ENCODE measurements at regions of chr1 and their contacts with region 1.

Region 1: DNA sequence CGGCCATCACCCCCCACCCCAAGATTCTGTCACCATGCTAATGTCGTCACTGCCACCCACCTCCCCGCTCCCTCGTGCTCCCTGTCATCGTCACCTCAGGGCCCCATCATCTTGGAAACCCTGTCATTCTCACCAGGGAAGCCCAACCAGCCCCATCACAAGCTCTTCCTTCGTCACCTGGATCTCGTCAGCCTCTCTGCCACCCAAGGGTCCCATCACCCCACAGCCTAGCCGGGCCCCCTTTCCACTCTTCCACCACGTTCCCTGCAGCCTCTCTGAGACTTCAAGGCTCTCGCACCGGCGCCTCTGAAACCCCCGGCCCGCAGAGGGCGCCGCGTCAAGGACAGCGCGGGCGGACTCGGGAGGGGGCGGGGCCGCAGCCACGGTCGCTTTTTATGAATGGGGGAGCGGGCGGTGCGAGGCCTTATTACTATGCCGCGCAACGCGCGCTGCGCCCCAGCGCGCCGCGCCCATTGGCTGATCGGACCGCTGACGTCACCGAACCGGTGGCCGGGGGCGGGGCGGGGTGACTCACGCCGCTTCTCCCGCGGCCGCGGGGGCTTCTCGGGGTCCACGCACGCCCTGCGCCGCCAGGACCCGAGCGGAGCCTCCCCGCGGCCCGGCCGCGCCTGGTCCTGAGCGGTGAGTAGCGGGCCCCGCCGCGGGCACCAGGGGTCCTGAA is at the start of gene GPR3:
- DNase-seq: peak; percentile 84 to 96 (median 91)
- ATAC-seq: peak; percentile 91 to 93 (median 92)
- H3K4me3 ChIP-seq: peak within 1 kb of the TSS; percentile 45 to 61
- H3K4me3 Mint-ChIP-seq: peak within 1 kb of the TSS; percentile 69 to 95 (median 76)
- H3K27ac ChIP-seq: no peak within 1 kb of the TSS
- H3K27ac Mint-ChIP-seq: peak within 1 kb of the TSS; percentile 37 to 38
- H3K4me1 ChIP-seq: peaks cover 5 to 30% of the 10 kb centered on the region in 2 experiments
- H3K4me1 Mint-ChIP-seq: peaks cover 11 to 26% (median 24%) of the 10 kb centered on the region in 3 donors
- H3K27me3 ChIP-seq: peaks cover 0 to 22% of the 10 kb centered on the region in 2 experiments
- H3K27me3 Mint-ChIP-seq: peaks cover 0 to 3% of the 10 kb centered on the region in 2 donors
- total RNA-seq, gene GPR3: 0.21 to 0.35 TPM in 2 of 5 donors, not detected in the others

Region 2: DNA sequence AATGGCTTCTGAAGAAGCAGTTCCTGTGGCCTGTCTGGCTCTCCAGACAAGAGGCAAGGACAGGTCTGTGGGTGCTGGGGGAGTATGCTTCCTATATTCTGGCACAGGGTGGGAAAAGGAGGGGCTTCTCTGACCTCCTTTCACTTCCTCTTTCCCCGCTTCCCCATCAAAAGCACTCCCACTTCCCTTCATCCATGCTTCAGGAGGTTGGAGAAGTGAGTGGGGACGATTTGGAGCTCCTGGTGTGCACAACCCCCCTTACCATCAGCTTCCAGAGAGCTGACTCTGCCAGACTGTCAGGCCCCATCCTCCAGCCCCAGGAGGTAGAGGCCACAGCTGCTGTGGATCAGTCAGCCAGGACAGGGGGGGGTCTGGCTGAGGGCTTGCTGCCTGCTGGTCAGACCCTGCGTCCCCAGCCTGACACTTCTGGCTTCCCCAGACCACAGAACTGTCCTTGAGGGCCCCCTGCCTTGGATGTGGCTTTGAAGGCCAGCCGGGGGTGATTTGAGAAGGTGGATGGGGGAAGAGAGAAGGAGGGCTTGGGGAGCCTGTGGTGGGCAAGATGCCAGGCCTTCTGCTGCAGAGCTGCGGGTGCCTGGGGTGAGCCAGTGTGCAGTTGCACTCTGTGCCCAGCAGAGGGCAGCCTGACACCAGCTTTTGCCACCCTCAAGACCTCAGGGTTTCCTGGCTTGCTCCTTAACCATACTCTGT is 91.7 kb before region 1 on chr1:
- CTCF ChIA-PET with region 1: interaction called, 40 to 44 read pairs
- POLR2A ChIA-PET with region 1: no interaction called
- DNase-seq: peak; percentile 46 to 92 (median 70)
- ATAC-seq: peak; percentile 83 to 90 (median 88)
- H3K4me3 ChIP-seq: no peak overlapping the region
- H3K4me3 Mint-ChIP-seq: no peak overlapping the region
- H3K27ac ChIP-seq: no peak overlapping the region
- H3K27ac Mint-ChIP-seq: no peak overlapping the region
- H3K4me1 ChIP-seq: peaks cover 0 to 8% of the 10 kb centered on the region in 2 experiments
- H3K4me1 Mint-ChIP-seq: peaks cover 0 to 5% (median 2%) of the 10 kb centered on the region in 3 donors
- H3K27me3 ChIP-seq: no peaks in the 10 kb centered on the region
- H3K27me3 Mint-ChIP-seq: no peaks in the 10 kb centered on the region

Region 3: GRCh38 chr1:27332536-27333281 is 59.5 kb before region 1 on chr1:
- CTCF ChIA-PET with region 1: interaction called, 4 to 11 read pairs
- POLR2A ChIA-PET with region 1: no interaction called
- DNase-seq: peak in 32 of 35 experiments; percentile 20 to 80 (median 48)
- ATAC-seq: peak; percentile 73 to 91 (median 80)
- H3K4me3 ChIP-seq: no peak overlapping the region
- H3K4me3 Mint-ChIP-seq: peak overlapping the region in 1 of 3 donors; percentile 5
- H3K27ac ChIP-seq: peak overlapping the region; percentile 32
- H3K27ac Mint-ChIP-seq: peak overlapping the region; percentile 44 to 75
- H3K4me1 ChIP-seq: peaks cover 3 to 24% of the 10 kb centered on the region in 2 experiments
- H3K4me1 Mint-ChIP-seq: peaks cover 36 to 43% (median 38%) of the 10 kb centered on the region in 3 donors
- H3K27me3 ChIP-seq: no peaks in the 10 kb centered on the region
- H3K27me3 Mint-ChIP-seq: no peaks in the 10 kb centered on the region

Region 4: GRCh38 chr1:27365372-27366112 is 26.7 kb before region 1 on chr1:
- CTCF ChIA-PET with region 1: interaction called, 3 to 12 read pairs
- POLR2A ChIA-PET with region 1: interaction called in 1 of 2 experiments, 4 read pairs
- DNase-seq: peak; percentile 37 to 84 (median 70)
- ATAC-seq: peak; percentile 70 to 76 (median 72)
- H3K4me3 ChIP-seq: peak overlapping the region; percentile 53 to 68
- H3K4me3 Mint-ChIP-seq: peak overlapping the region; percentile 85 to 87 (median 86)
- H3K27ac ChIP-seq: no peak overlapping the region
- H3K27ac Mint-ChIP-seq: peak overlapping the region; percentile 57 to 82
- H3K4me1 ChIP-seq: peaks cover 15 to 41% of the 10 kb centered on the region in 2 experiments
- H3K4me1 Mint-ChIP-seq: peaks cover 38 to 48% (median 43%) of the 10 kb centered on the region in 3 donors
- H3K27me3 ChIP-seq: peaks cover 0 to 11% of the 10 kb centered on the region in 2 experiments
- H3K27me3 Mint-ChIP-seq: no peaks in the 10 kb centered on the region

Region 5: GRCh38 chr1:28910379-28911115 is 1518.3 kb after region 1 on chr1:
- CTCF ChIA-PET with region 1: interaction called in 1 of 2 experiments, 3 read pairs
- POLR2A ChIA-PET with region 1: interaction called in 1 of 2 experiments, 10 read pairs
- DNase-seq: no peak
- ATAC-seq: no peak
- H3K4me3 ChIP-seq: no peak overlapping the region
- H3K4me3 Mint-ChIP-seq: no peak overlapping the region
- H3K27ac ChIP-seq: no peak overlapping the region
- H3K27ac Mint-ChIP-seq: peak overlapping the region; percentile 4 to 50
- H3K4me1 ChIP-seq: peaks cover 8 to 9% of the 10 kb centered on the region in 2 experiments
- H3K4me1 Mint-ChIP-seq: peaks cover 9 to 11% (median 9%) of the 10 kb centered on the region in 3 donors
- H3K27me3 ChIP-seq: no peaks in the 10 kb centered on the region
- H3K27me3 Mint-ChIP-seq: no peaks in the 10 kb centered on the region